Left lung (tissue), 14 donors: ENCODE measurements at regions of chr11 and their contacts with region 1.

Region 1: GRCh38 chr11:60363542-60364510 is 14.5 kb upstream of the MS4A7 start:
- DNase-seq: peak in 3 of 4 donors; percentile 56 to 72 (median 59)
- ATAC-seq: peak; percentile 97
- H3K4me3 ChIP-seq: no peak overlapping the region
- H3K27ac ChIP-seq: peak overlapping the region in 1 of 2 donors; percentile 79
- H3K4me1 ChIP-seq: peaks cover 0 to 35% of the 10 kb centered on the region in 2 donors
- H3K27me3 ChIP-seq: no peaks in the 10 kb centered on the region
- CTCF ChIP-seq: peak; percentile 67 to 79

Region 2: GRCh38 chr11:60615497-60615896 is 251.7 kb after region 1 on chr11:
- intact Hi-C with region 1: loop called in 1 of 2 experiments (anchors 10 kb)
- DNase-seq: no peak
- ATAC-seq: no peak
- H3K4me3 ChIP-seq: no peak overlapping the region
- H3K27ac ChIP-seq: no peak overlapping the region
- H3K4me1 ChIP-seq: no peaks in the 10 kb centered on the region
- H3K27me3 ChIP-seq: no peaks in the 10 kb centered on the region
- CTCF ChIP-seq: no peak

Region 3: DNA sequence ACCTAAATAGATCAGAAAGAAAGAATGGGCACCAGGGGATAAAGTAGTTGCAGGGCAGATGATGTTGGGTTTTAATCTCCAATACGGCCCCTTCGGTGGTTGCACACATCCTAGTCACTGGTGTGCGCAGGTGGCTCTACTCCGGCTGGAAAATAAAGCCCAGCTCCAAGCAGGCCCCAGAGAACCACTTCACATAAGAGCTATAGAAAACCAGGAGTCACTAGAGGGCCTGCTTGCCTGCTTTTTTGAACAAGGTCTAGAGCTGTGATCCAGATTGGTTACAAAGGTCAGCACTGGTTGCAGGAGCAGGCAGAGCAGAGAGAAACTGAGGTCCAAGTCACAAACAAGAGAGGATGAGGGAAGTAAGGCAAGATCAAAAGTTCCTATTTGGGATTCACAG is 294.1 kb after region 1 on chr11:
- intact Hi-C with region 1: no loop called
- DNase-seq: peak in 3 of 4 donors; percentile 4 to 36 (median 29)
- ATAC-seq: peak; percentile 89
- H3K4me3 ChIP-seq: no peak overlapping the region
- H3K27ac ChIP-seq: peak overlapping the region; percentile 70 to 73
- H3K4me1 ChIP-seq: no peaks in the 10 kb centered on the region
- H3K27me3 ChIP-seq: no peaks in the 10 kb centered on the region
- CTCF ChIP-seq: no peak

Region 4: DNA sequence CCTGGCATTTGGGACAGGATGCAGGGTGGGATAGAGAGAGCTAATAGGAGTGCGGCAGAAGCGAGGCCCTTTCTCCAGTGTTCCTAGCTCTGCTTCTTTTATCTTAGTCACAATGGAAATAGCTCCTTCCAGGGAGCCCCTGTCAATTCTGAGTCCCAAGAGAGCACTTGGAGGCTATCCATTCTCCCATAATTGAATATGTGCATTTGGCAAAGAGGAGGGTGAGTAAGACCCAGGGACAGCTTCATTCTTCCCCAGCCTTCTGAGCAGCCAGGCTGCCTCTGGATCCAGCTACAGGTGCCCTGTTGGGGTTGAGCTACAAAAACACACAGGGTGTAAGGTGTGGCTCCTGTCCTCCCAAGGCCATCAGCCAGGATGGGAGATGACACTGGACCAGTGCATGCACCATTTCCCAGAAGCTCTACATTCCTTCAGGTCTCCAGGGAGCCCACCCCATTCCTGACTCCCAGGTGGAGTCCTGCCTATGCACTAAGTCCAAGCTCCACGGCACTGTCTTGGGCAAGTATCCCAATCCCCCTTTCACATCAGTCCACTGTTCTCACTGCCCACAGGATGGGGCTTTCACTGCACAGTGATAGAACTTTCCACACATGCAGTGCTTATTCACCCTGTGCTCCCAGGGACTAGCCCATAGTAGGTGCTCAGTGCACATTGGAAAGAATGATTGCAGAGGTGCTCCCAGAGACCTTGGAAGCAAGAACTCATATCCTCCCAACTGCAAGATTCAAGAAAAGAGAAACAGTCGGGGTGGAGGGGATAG is 427.5 kb after region 1 on chr11:
- intact Hi-C with region 1: no loop called
- DNase-seq: no peak
- ATAC-seq: no peak
- H3K4me3 ChIP-seq: no peak overlapping the region
- H3K27ac ChIP-seq: no peak overlapping the region
- H3K4me1 ChIP-seq: no peaks in the 10 kb centered on the region
- H3K27me3 ChIP-seq: peaks cover 0 to 4% of the 10 kb centered on the region in 2 donors
- CTCF ChIP-seq: no peak